Esophagus muscularis mucosa (tissue), 4 donors: ENCODE measurements at regions of chr1 and their contacts with region 1.

Region 1: GRCh38 chr1:110106013-110106941 is 6.0 kb upstream of the UBL4B start:
- DNase-seq: no peak
- H3K4me3 ChIP-seq: no peak overlapping the region
- H3K27ac ChIP-seq: no peak overlapping the region
- H3K4me1 ChIP-seq: peaks cover 0 to 6% (median 0%) of the 10 kb centered on the region in 4 donors
- H3K27me3 ChIP-seq: no peaks in the 10 kb centered on the region
- CTCF ChIP-seq: peak; percentile 83 to 97 (median 85)
- EP300 ChIP-seq: no peak
- POLR2A ChIP-seq: no peak

Region 2: GRCh38 chr1:110053557-110054428 is 52.5 kb before region 1 on chr1:
- intact Hi-C with region 1: loop called (anchors 2 kb)
- DNase-seq: no peak
- H3K4me3 ChIP-seq: no peak overlapping the region
- H3K27ac ChIP-seq: no peak overlapping the region
- H3K4me1 ChIP-seq: peaks cover 31 to 65% (median 60%) of the 10 kb centered on the region in 4 donors
- H3K27me3 ChIP-seq: no peaks in the 10 kb centered on the region
- CTCF ChIP-seq: peak; percentile 92 to 99 (median 94)
- EP300 ChIP-seq: no peak
- POLR2A ChIP-seq: no peak